CD4-positive, alpha-beta memory T cell (primary cell): ENCODE measurements at regions of chr11 and their contacts with region 1.

Region 1: GRCh38 chr11:12331239-12331874 is 46.0 kb upstream of the PARVA start:
- DNase-seq: peak; percentile 68 to 71 (median 68)
- H3K4me3 ChIP-seq: no peak overlapping the region
- H3K4me3 Mint-ChIP-seq: no peak overlapping the region
- H3K27ac ChIP-seq: no peak overlapping the region
- H3K27ac Mint-ChIP-seq: peak overlapping the region in 1 of 7 donors; percentile 25
- H3K4me1 ChIP-seq: no peaks in the 10 kb centered on the region
- H3K4me1 Mint-ChIP-seq: peaks cover 0 to 5% (median 3%) of the 10 kb centered on the region in 4 donors
- H3K27me3 ChIP-seq: no peaks in the 10 kb centered on the region
- H3K27me3 Mint-ChIP-seq: no peaks in the 10 kb centered on the region

Region 2: DNA sequence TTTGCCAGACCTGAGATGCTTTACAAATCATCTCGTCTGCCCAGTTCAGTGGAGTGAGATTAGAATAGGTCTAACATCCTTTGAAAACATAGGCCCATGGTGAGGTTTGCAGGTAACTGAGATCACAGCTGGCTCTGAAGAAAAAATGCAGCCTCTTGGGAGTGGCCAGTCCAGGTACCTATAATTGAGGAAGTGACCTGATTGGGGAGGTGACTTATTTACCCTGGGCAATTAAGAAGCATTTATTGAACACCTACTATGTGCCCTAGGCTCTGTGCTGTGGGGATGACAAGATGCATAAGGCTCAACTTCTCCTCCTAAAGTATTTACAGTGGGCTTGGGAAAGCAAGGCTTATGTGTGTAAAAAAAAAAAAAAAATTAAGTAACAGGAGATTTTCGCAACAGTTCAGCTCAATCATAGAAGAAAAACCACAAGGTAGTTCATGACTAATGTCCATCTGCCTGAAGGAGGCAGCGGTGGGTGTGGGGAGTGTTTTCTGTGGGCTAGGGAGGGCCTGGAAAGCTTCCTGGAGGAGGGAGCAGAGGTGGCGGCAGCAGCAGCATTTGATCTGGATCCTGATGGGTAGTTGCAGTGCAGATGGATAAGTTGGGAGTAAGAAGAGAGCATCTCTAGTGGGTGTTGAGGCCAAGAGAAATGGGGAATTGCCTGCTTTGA is 204.9 kb before region 1 on chr11:
- CTCF ChIA-PET with region 1: no interaction called
- POLR2A ChIA-PET with region 1: no interaction called
- intact Hi-C with region 1: no loop called
- DNase-seq: no peak
- H3K4me3 ChIP-seq: no peak overlapping the region
- H3K4me3 Mint-ChIP-seq: no peak overlapping the region
- H3K27ac ChIP-seq: no peak overlapping the region
- H3K27ac Mint-ChIP-seq: peak overlapping the region in 4 of 7 donors; percentile 12 to 62 (median 32)
- H3K4me1 ChIP-seq: peaks cover 24% of the 10 kb centered on the region
- H3K4me1 Mint-ChIP-seq: peaks cover 18 to 34% (median 24%) of the 10 kb centered on the region in 4 donors
- H3K27me3 ChIP-seq: no peaks in the 10 kb centered on the region
- H3K27me3 Mint-ChIP-seq: no peaks in the 10 kb centered on the region

Region 3: GRCh38 chr11:12149672-12150225 is 181.6 kb before region 1 on chr11:
- CTCF ChIA-PET with region 1: no interaction called
- POLR2A ChIA-PET with region 1: no interaction called
- intact Hi-C with region 1: no loop called
- DNase-seq: no peak
- H3K4me3 ChIP-seq: no peak overlapping the region
- H3K4me3 Mint-ChIP-seq: peak overlapping the region in 3 of 8 donors; percentile 13 to 29 (median 25)
- H3K27ac ChIP-seq: no peak overlapping the region
- H3K27ac Mint-ChIP-seq: peak overlapping the region in 4 of 7 donors; percentile 3 to 49 (median 22)
- H3K4me1 ChIP-seq: peaks cover 23% of the 10 kb centered on the region
- H3K4me1 Mint-ChIP-seq: peaks cover 24 to 42% (median 32%) of the 10 kb centered on the region in 4 donors
- H3K27me3 ChIP-seq: no peaks in the 10 kb centered on the region
- H3K27me3 Mint-ChIP-seq: no peaks in the 10 kb centered on the region

Region 4: GRCh38 chr11:12288212-12288930 is 43.0 kb before region 1 on chr11:
- CTCF ChIA-PET with region 1: interaction called, 10 read pairs
- POLR2A ChIA-PET with region 1: no interaction called
- intact Hi-C with region 1: no loop called
- DNase-seq: peak in 4 of 5 donors; percentile 25 to 34 (median 26)
- H3K4me3 ChIP-seq: no peak overlapping the region
- H3K4me3 Mint-ChIP-seq: peak overlapping the region in 1 of 8 donors; percentile 25
- H3K27ac ChIP-seq: no peak overlapping the region
- H3K27ac Mint-ChIP-seq: peak overlapping the region in 1 of 7 donors; percentile 29
- H3K4me1 ChIP-seq: peaks cover 14% of the 10 kb centered on the region
- H3K4me1 Mint-ChIP-seq: peaks cover 7 to 28% (median 19%) of the 10 kb centered on the region in 4 donors
- H3K27me3 ChIP-seq: no peaks in the 10 kb centered on the region
- H3K27me3 Mint-ChIP-seq: peaks cover 0 to 2% of the 10 kb centered on the region in 2 donors

Region 5: DNA sequence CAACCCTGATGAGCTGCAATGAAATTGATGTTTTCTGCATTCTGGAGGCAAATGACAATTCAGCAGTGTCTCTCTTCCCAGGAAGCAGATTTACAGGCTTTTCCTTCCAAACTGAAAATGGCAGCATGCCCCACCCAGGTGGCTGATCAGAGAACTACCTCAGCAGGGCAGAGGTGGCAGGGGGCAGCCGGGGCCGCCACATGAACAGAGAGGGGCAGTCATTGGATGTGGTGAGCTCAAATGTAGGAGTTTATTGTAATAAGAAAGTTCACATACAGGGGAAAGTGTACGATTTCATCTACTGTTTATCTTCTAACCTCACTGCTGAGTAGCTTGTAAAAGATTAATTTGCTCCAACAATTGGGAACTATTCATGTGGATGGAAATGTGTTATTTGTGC is 30.3 kb after region 1 on chr11:
- CTCF ChIA-PET with region 1: interaction called, 45 read pairs
- POLR2A ChIA-PET with region 1: interaction called, 8 read pairs
- intact Hi-C with region 1: loop called (anchors 1 kb)
- DNase-seq: no peak
- H3K4me3 ChIP-seq: no peak overlapping the region
- H3K4me3 Mint-ChIP-seq: peak overlapping the region in 2 of 8 donors; percentile 48 to 63
- H3K27ac ChIP-seq: no peak overlapping the region
- H3K27ac Mint-ChIP-seq: peak overlapping the region in 5 of 7 donors; percentile 9 to 79 (median 61)
- H3K4me1 ChIP-seq: peaks cover 68% of the 10 kb centered on the region
- H3K4me1 Mint-ChIP-seq: peaks cover 54 to 83% (median 64%) of the 10 kb centered on the region in 4 donors
- H3K27me3 ChIP-seq: no peaks in the 10 kb centered on the region
- H3K27me3 Mint-ChIP-seq: no peaks in the 10 kb centered on the region

Region 6: DNA sequence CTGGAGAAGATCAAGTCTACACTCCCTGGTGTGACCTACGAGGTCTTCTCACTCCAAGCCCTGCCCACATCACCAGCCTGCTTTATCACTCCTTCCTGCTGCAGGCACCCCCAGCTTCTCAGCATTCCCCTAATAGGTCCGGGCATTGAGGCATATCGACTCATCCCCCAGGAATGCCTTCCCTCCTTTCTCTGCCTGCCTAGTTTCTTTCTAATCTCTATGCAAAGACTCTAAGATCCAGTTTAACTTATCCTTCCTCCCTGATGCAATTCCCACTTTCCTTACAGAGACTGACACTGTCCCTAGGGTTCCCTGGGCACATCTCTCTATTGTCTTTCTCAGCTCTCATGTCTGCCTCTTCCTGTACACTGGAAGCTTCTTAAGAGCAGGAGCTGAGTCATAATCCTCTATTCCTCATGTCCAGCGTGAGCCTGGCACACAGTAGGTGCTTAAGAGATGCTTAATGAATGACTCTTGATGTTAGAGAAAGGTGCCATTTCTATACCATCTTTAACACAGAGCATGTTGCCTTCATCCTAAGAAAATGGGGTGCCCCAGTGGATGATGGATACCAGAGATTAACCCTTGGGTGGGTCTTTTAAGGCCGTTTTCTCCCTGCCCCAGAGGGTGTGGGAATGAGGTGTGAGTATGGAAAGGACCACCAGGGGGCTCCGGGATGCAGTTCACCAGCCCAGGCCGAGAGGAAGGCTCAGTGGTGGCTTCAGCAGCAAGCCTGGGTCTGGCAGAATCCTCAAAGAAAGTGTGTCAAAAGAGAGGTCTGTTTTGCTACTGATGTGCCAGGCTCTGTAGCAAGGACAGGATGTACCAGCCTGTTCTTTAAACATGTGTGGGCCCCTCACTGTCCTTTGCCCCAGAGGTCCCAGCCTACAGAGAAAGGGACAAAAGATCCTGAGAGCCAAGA is 80.7 kb after region 1 on chr11:
- CTCF ChIA-PET with region 1: interaction called, 18 read pairs
- POLR2A ChIA-PET with region 1: no interaction called
- intact Hi-C with region 1: loop called (anchors 1 kb)
- DNase-seq: peak in 4 of 5 donors; percentile 9 to 38 (median 16)
- H3K4me3 ChIP-seq: no peak overlapping the region
- H3K4me3 Mint-ChIP-seq: no peak overlapping the region
- H3K27ac ChIP-seq: no peak overlapping the region
- H3K27ac Mint-ChIP-seq: peak overlapping the region in 1 of 7 donors; percentile 5
- H3K4me1 ChIP-seq: no peaks in the 10 kb centered on the region
- H3K4me1 Mint-ChIP-seq: no peaks in the 10 kb centered on the region
- H3K27me3 ChIP-seq: peaks cover 4% of the 10 kb centered on the region
- H3K27me3 Mint-ChIP-seq: peaks cover 0 to 5% of the 10 kb centered on the region in 2 donors

Region 7: DNA sequence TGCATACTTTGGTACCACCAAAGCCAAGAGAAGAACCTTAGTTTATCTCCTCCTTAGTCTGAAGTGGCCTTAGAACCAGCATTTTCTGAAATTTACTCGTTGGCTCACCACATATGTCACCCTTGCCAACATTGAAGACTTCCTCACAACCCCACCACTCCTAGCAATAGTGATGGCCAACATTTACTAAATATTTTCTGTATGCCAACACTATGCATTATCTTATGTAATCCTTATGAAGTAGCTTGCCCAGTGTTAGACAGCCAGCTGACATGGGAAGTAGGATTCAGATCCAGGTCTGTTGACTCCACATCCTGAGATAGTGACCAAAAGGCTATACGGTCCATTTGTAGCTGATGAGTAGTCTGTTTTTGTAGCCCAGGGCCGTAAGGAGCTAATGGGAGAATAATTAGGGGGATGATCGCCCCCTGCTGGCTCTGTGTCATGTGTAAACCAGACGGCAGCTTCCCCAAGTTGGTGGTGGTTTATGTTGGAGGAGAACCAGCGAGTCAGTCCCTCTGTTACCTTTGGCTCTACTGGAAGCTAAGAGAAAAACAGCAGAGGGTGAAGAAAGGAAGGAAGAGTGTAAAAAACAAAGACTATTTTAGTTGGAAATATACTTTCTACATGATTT is 557.3 kb after region 1 on chr11:
- CTCF ChIA-PET with region 1: interaction called, 239 read pairs
- POLR2A ChIA-PET with region 1: interaction called, 9 read pairs
- intact Hi-C with region 1: loop called (anchors 1 kb)
- DNase-seq: peak; percentile 52 to 57 (median 56)
- H3K4me3 ChIP-seq: no peak overlapping the region
- H3K4me3 Mint-ChIP-seq: no peak overlapping the region
- H3K27ac ChIP-seq: no peak overlapping the region
- H3K27ac Mint-ChIP-seq: no peak overlapping the region
- H3K4me1 ChIP-seq: no peaks in the 10 kb centered on the region
- H3K4me1 Mint-ChIP-seq: peaks cover 0 to 5% (median 1%) of the 10 kb centered on the region in 4 donors
- H3K27me3 ChIP-seq: no peaks in the 10 kb centered on the region
- H3K27me3 Mint-ChIP-seq: peaks cover 3 to 16% of the 10 kb centered on the region in 2 donors

Region 8: DNA sequence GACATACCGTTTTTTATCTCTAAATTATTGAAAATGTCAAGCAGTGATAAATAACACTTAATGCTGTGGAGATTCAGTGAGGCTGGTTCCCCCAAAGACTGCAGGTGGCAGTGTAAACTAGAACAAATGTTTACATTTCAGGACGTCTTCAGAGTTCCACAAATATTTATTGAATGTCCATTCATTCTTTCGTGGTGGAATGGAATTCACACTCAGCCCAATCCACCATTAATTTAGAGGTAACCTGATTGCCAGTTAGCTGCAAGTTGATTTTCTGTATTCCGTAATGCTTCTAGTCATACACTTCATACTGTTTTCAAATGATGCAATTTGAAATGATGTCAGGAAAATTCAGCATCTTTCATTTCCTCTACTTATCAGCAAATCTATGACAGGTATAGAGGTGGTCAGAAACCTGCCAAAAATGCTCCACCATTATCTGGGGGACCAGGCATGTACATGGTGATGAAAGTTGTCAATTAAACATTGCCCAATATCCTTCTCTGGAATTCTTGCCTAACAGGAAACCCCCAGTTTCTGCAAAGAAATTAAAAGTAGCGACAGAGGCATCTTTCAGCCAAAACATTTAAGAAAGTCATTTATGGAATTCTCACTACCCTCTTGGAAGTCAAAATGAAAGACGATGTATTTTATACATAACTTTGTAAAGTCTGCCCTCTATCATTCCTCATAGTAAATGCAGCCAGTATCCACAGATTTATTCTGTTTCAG is 851.9 kb after region 1 on chr11:
- CTCF ChIA-PET with region 1: no interaction called
- POLR2A ChIA-PET with region 1: no interaction called
- intact Hi-C with region 1: loop called (anchors 5 kb)
- DNase-seq: peak in 4 of 5 donors; percentile 12 to 32 (median 24)
- H3K4me3 ChIP-seq: no peak overlapping the region
- H3K4me3 Mint-ChIP-seq: peak overlapping the region in 7 of 8 donors; percentile 44 to 65 (median 60)
- H3K27ac ChIP-seq: no peak overlapping the region
- H3K27ac Mint-ChIP-seq: no peak overlapping the region
- H3K4me1 ChIP-seq: peaks cover 7% of the 10 kb centered on the region
- H3K4me1 Mint-ChIP-seq: peaks cover 3 to 6% (median 6%) of the 10 kb centered on the region in 4 donors
- H3K27me3 ChIP-seq: no peaks in the 10 kb centered on the region
- H3K27me3 Mint-ChIP-seq: peaks cover 8 to 12% of the 10 kb centered on the region in 2 donors